ENCODE measurements at regions of chr14 and their contacts with region 1.

Region 1: DNA sequence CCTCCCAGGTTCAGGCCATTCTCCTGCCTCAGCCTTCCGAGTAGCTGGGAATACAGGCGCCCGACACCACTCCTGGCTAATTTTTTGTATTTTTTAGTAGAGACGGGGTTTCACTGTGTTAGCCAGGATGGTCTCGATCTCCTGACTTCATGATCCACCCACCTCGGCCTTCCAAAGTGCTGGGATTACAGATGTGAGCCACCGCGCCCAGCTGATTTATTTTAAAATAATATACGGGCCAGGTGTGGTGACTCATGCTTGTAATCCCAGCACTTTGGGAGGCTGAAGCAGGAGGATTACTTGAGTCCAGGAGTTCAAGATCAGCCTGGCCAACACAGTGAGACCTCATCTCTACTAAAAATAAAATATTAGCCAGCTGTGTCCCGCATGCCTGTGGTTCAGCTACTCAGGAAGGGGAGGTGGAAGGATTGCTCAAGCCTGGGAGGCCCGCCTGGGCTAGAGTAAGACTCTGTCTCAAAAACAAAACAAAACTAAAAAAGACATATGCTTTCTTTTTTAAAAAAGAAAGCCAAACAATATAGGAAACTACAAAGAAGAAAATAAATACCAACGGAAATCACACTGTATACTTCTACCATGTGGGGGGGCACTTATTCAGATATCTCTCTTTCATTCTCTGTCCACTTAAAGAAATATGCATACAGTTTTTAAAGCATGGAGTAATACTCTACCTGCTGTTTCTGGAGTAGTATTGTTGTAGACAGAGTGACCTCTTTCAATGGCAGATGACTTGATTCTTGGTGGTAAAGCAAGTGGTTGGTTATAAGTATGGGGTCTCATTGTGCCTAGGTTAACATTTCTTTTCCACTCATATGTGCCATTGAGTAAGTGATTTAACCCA is 930 bp upstream of the MIA2 start:
- DNase-seq: peak; percentile 90
- ATAC-seq: peak; percentile 84
- H3K4me3 ChIP-seq: peak overlapping the region; percentile 65 to 72 (median 65)
- H3K27ac ChIP-seq: peak overlapping the region; percentile 69
- H3K4me1 ChIP-seq: peaks cover 49% of the 10 kb centered on the region
- H3K27me3 ChIP-seq: no peaks in the 10 kb centered on the region; a peak in 1 of 5 replicates
- CTCF ChIP-seq: peak; percentile 4; the same call in 1 of the 2 replicates
- EP300 ChIP-seq: peak in 1 of 2 experiments; percentile 75; a peak in 3 of 4 replicates
- POLR2A ChIP-seq: no peak
- RAD21 ChIP-seq: peak; percentile 44

Region 2: DNA sequence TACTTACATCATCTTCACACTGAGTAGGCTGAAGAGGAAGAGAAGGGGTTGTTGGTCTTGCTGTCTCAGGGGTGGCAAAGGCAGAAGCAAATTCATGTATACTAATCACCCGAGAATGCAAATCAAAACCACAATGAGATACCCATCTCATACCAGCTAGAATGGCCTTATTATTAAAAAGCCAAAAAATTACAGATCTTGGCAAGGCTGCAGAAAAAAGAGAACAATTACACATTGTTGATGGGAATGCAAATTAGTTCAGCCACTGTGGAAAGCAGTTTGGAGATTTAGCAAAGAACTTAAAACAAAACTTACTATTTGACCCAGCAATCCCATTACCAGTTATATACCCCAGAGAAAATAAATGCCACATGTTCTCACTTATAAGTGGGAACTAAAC is 284.6 kb before region 1 on chr14:
- CTCF ChIA-PET with region 1: no interaction called
- POLR2A ChIA-PET with region 1: no interaction called
- in situ Hi-C with region 1: no loop called
- intact Hi-C with region 1: no loop called
- DNase-seq: no peak
- ATAC-seq: no peak
- H3K4me3 ChIP-seq: no peak overlapping the region
- H3K27ac ChIP-seq: no peak overlapping the region
- H3K4me1 ChIP-seq: no peaks in the 10 kb centered on the region
- H3K27me3 ChIP-seq: no peaks in the 10 kb centered on the region
- CTCF ChIP-seq: no peak
- EP300 ChIP-seq: no peak
- POLR2A ChIP-seq: no peak
- RAD21 ChIP-seq: no peak

Region 3: DNA sequence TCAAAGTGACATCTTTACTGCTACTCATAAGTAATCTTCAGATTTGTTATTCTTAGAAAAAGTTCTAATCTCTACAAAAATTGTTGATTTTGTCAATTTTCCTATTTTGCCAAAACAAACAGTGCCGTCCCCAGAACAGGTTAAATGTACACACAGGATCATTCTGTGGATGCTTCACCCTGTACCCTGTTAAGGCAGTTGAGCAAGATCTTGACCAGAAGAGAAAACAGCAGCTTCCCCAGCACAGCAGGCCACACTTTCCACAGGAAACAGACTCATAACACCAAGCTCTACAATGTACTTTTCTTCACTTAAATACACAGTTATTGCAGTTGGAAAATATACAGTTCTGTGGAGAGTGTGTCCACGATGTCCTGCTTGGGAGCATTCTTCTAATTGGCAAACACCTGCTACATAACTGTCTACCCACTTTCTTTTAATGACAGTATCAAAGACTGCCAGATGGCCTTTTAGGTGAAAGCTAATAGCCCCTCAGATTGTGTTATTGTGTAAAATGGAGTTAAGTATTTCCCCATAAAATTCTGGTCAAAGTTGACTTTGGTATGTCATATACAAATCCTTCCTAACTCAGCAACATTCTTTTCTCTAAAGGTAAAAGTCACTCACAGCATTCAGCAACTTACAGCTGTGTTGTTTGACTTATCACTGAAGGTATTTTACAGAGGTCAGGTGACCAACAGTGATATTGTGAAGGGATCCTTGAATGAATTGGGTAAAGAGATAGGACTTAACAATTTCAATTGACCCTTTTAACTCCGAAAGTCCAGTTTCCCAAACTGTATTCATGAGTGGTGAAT is 206.8 kb before region 1 on chr14:
- CTCF ChIA-PET with region 1: no interaction called
- POLR2A ChIA-PET with region 1: interaction called, 3 read pairs
- in situ Hi-C with region 1: no loop called
- intact Hi-C with region 1: loop called (anchors 10 kb)
- DNase-seq: peak; percentile 87
- ATAC-seq: peak; percentile 74
- H3K4me3 ChIP-seq: peak overlapping the region in 1 of 3 experiments; percentile 8; a peak in 1 of 6 replicates
- H3K27ac ChIP-seq: peak overlapping the region; percentile 74
- H3K4me1 ChIP-seq: peaks cover 48% of the 10 kb centered on the region
- H3K27me3 ChIP-seq: no peaks in the 10 kb centered on the region
- CTCF ChIP-seq: 0 out of 2 replicates have a peak, but pooled peaks have one; percentile 8
- EP300 ChIP-seq: peak in 1 of 2 experiments; percentile 86; a peak in 2 of 4 replicates
- POLR2A ChIP-seq: no peak
- RAD21 ChIP-seq: peak; percentile 32; the same call in 1 of the 2 replicates

Region 4: DNA sequence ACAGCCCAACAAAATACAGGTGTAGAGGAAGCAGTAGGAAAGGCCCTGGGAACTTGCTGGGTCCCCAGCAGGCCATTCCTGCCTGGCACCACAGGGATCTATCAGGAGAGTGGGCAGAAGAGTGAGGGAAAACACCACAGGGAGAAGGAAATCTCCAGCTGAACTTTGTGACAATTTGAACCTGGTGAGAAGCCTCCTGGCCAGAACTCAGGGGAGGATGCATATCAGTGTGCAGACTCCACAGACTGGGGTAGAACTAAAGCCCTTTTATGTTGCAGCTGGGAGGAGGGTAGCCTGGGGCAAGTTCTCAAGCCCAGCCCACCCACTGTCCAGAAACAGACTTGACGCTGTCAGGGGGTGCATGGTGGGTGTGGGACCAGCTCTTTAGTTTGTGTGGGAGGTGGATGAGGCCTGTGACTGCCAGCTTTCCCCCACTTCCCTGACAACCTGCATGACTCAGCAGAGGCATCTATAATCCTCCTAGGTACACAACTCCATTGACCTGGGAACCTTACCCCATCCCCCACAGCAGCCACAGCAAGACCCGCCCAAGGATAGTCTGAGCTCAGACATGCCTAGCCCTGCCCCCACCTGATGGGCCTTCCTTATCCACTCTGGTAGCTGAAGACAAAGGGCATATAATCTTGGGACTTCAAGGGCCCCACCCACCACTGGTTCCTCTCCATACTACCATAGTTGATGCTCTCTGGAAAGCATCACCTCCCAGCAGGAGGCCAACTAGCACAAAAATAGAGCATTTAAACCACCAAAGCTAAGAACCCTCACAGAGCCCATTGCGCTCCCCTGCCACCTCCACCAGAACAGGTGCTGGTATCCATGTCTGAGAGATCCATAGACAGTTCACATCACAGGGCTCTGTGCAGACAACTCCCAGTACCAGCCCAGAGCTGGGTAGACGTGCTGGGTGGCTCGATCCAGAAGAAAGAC is 28.9 kb before region 1 on chr14:
- CTCF ChIA-PET with region 1: no interaction called
- POLR2A ChIA-PET with region 1: interaction called, 13 read pairs
- in situ Hi-C with region 1: no loop called
- intact Hi-C with region 1: no loop called
- DNase-seq: peak; percentile 70
- ATAC-seq: peak; percentile 83
- H3K4me3 ChIP-seq: peak overlapping the region in 1 of 3 experiments; percentile 27; a peak in 2 of 6 replicates
- H3K27ac ChIP-seq: peak overlapping the region; percentile 49
- H3K4me1 ChIP-seq: peaks cover 30% of the 10 kb centered on the region
- H3K27me3 ChIP-seq: no peaks in the 10 kb centered on the region
- CTCF ChIP-seq: no peak
- EP300 ChIP-seq: no peak
- POLR2A ChIP-seq: no peak
- RAD21 ChIP-seq: no peak

Region 5: GRCh38 chr14:39368261-39368959 is 135.6 kb after region 1 on chr14:
- CTCF ChIA-PET with region 1: interaction called, 11 read pairs
- POLR2A ChIA-PET with region 1: interaction called, 4 read pairs
- in situ Hi-C with region 1: loop called (anchors 5 kb)
- intact Hi-C with region 1: loop called (anchors 1 kb)
- DNase-seq: peak; percentile 88
- ATAC-seq: peak; percentile 77
- H3K4me3 ChIP-seq: no peak overlapping the region
- H3K27ac ChIP-seq: no peak overlapping the region
- H3K4me1 ChIP-seq: peaks cover 5% of the 10 kb centered on the region; the same call in 1 of the 2 replicates
- H3K27me3 ChIP-seq: no peaks in the 10 kb centered on the region
- CTCF ChIP-seq: peak; percentile 82
- EP300 ChIP-seq: no peak
- POLR2A ChIP-seq: no peak
- RAD21 ChIP-seq: peak; percentile 86

Region 6: GRCh38 chr14:39432179-39432618 is 199.4 kb after region 1 on chr14 and contains the start of gene FBXO33:
- CTCF ChIA-PET with region 1: no interaction called
- POLR2A ChIA-PET with region 1: interaction called, 15 read pairs
- in situ Hi-C with region 1: loop called (anchors 5 kb)
- intact Hi-C with region 1: loop called (anchors 2 kb)
- DNase-seq: peak; percentile 98
- ATAC-seq: peak; percentile 87
- H3K4me3 ChIP-seq: peak within 1 kb of the TSS; percentile 88 to 98 (median 94)
- H3K27ac ChIP-seq: peak within 1 kb of the TSS; percentile 98
- H3K4me1 ChIP-seq: peaks cover 37% of the 10 kb centered on the region
- H3K27me3 ChIP-seq: no peaks in the 10 kb centered on the region; a peak in 1 of 5 replicates
- CTCF ChIP-seq: no peak
- EP300 ChIP-seq: peak in 1 of 2 experiments; percentile 77; a peak in 2 of 4 replicates
- POLR2A ChIP-seq: no peak
- RAD21 ChIP-seq: peak; percentile 27; the same call in 1 of the 2 replicates
- total RNA-seq, gene FBXO33: 15.5 and 23.3 TPM in 2 replicates

Region 7: DNA sequence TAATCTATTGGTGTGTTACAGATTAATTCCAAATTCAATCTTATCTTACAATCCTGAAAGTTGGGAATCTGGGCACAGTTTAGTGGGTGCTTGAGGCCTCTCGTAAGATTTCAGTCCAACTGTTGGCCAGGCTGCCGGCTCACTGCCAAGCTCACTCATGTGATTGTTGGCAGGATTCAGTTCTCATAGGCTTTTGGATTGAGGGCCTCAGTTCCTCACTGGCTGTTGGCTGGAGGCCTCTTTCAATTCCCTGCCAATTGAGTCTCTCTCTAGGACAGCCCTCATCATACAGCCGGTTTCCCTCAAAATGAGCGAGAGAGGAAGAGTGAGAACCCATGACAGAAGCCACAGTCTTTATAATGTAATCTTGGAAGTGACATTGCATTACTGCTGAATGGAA is 323.0 kb after region 1 on chr14:
- CTCF ChIA-PET with region 1: no interaction called
- POLR2A ChIA-PET with region 1: no interaction called
- in situ Hi-C with region 1: no loop called
- intact Hi-C with region 1: no loop called
- DNase-seq: no peak
- ATAC-seq: no peak
- H3K4me3 ChIP-seq: no peak overlapping the region
- H3K27ac ChIP-seq: no peak overlapping the region
- H3K4me1 ChIP-seq: no peaks in the 10 kb centered on the region
- H3K27me3 ChIP-seq: no peaks in the 10 kb centered on the region
- CTCF ChIP-seq: no peak
- EP300 ChIP-seq: no peak
- POLR2A ChIP-seq: no peak
- RAD21 ChIP-seq: no peak

Region 8: GRCh38 chr14:40436551-40436950 is 1203.8 kb after region 1 on chr14:
- CTCF ChIA-PET with region 1: no interaction called
- POLR2A ChIA-PET with region 1: no interaction called
- in situ Hi-C with region 1: no loop called
- intact Hi-C with region 1: no loop called
- DNase-seq: no peak
- ATAC-seq: no peak
- H3K4me3 ChIP-seq: no peak overlapping the region
- H3K27ac ChIP-seq: no peak overlapping the region
- H3K4me1 ChIP-seq: no peaks in the 10 kb centered on the region
- H3K27me3 ChIP-seq: no peaks in the 10 kb centered on the region
- CTCF ChIP-seq: no peak
- EP300 ChIP-seq: no peak
- POLR2A ChIP-seq: no peak
- RAD21 ChIP-seq: no peak